Activated CD8-positive, alpha-beta T cell treated with anti-CD3 and anti-CD28 coated beads for 36 hours (primary cell): ENCODE measurements at regions of chr3 and their contacts with region 1.

Region 1: GRCh38 chr3:115814778-115815380 is 191.6 kb downstream of the GAP43 start:
- DNase-seq: peak; percentile 78
- ATAC-seq: peak; percentile 80
- H3K4me3 Mint-ChIP-seq: no peak overlapping the region
- H3K27ac Mint-ChIP-seq: no peak overlapping the region
- H3K4me1 Mint-ChIP-seq: no peaks in the 10 kb centered on the region
- H3K27me3 Mint-ChIP-seq: peaks cover 8% of the 10 kb centered on the region
- CTCF ChIP-seq: peak; percentile 93

Region 2: GRCh38 chr3:115217678-115218451 is 597.0 kb before region 1 on chr3:
- CTCF ChIA-PET with region 1: interaction called, 15 read pairs
- POLR2A ChIA-PET with region 1: no interaction called
- intact Hi-C with region 1: loop called (anchors 10 kb)
- DNase-seq: peak; percentile 18
- ATAC-seq: no peak
- H3K4me3 Mint-ChIP-seq: no peak overlapping the region
- H3K27ac Mint-ChIP-seq: no peak overlapping the region
- H3K4me1 Mint-ChIP-seq: no peaks in the 10 kb centered on the region
- H3K27me3 Mint-ChIP-seq: no peaks in the 10 kb centered on the region
- CTCF ChIP-seq: peak; percentile 63

Region 3: DNA sequence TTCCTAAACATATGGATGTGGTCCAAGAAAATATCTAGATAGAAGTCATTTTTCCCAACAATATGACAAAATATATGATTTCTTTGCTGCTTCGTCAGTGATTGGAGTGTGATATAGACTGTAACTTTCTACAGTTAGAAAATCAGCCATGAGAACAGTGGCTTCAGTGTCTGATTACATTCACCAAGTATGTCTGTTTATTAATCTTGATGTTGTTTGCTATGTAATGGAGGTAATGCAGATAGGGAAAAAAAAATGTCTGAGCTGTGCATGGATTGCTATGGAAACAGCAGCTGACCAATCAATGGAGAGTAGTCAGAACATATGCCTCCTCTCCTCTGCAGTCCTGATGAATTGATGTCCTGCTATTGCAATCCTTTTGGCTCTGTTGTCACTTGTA is 263.9 kb before region 1 on chr3:
- CTCF ChIA-PET with region 1: no interaction called
- POLR2A ChIA-PET with region 1: no interaction called
- intact Hi-C with region 1: no loop called
- DNase-seq: no peak
- ATAC-seq: no peak
- H3K4me3 Mint-ChIP-seq: no peak overlapping the region
- H3K27ac Mint-ChIP-seq: no peak overlapping the region
- H3K4me1 Mint-ChIP-seq: no peaks in the 10 kb centered on the region
- H3K27me3 Mint-ChIP-seq: peaks cover 15% of the 10 kb centered on the region
- CTCF ChIP-seq: no peak

Region 4: DNA sequence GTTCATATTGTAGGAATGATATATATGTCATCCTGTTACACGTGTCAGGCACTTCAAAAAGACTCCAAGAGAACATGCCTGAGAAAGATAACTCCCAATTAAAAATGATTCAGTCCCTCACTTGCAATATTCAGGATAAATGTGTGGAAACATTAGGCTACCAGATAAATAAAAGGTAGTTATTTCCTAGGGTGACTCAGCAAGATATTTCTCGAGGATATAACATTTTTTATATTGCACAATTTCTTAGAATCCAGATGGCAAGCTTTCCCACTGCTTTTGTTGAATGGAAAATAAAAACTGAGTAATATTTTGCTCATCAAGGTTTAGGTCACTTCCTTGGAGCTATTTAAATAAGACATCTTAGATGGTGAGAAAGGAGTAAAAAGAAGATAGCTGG is 10.2 kb before region 1 on chr3:
- CTCF ChIA-PET with region 1: interaction called, 14 read pairs
- POLR2A ChIA-PET with region 1: no interaction called
- intact Hi-C with region 1: no loop called
- DNase-seq: no peak
- ATAC-seq: no peak
- H3K4me3 Mint-ChIP-seq: no peak overlapping the region
- H3K27ac Mint-ChIP-seq: no peak overlapping the region
- H3K4me1 Mint-ChIP-seq: peaks cover 2% of the 10 kb centered on the region
- H3K27me3 Mint-ChIP-seq: peaks cover 33% of the 10 kb centered on the region
- CTCF ChIP-seq: no peak